SK-N-SH (cell line): ENCODE measurements at regions of chr5 and their contacts with region 1.

Region 1: GRCh38 chr5:130871346-130872086 is 293.5 kb downstream of the HINT1 start:
- DNase-seq: peak; percentile 30
- H3K4me3 ChIP-seq: no peak overlapping the region; a peak in 1 of 4 replicates
- H3K27ac ChIP-seq: no peak overlapping the region
- H3K4me1 ChIP-seq: no peaks in the 10 kb centered on the region
- H3K27me3 ChIP-seq: no peaks in the 10 kb centered on the region; the same call in 1 of the 2 replicates
- CTCF ChIP-seq: peak; percentile 75
- EP300 ChIP-seq: no peak
- RAD21 ChIP-seq: peak; percentile 59

Region 2: DNA sequence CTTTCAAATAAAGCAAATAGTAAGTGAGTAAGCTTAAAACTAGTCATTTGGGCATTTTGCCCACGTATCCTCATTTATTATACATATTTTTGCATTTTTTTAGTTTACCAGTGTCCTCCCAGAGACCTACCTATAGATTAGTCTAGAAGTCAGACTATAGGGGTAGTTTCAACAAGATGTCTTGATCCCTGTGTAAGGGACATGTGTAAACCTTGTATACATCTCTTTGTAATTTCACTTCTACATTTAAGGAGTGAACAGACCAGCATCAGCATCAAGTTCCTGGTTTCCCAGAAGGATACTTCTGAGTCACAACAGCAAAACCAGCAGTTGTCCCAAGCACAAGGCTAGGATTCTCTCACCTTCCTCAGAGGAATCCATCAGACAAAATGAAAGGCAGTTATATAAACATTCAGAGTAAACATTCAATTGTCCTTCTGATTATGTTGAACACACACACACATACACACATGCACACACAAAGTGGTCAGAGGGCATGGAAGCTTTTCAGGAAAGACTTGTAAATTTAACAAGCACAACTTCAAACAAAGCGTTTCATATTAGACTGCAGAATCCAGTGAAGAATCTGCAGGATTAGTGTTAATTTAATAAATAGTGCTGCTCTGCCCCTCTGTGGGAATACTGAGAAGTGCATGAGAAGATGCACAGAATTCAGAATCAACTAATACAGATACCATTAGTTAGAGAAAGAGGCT is 238.2 kb after region 1 on chr5:
- CTCF ChIA-PET with region 1: interaction called, 13 read pairs
- POLR2A ChIA-PET with region 1: interaction called, 4 read pairs
- DNase-seq: peak; percentile 46
- H3K4me3 ChIP-seq: no peak overlapping the region
- H3K27ac ChIP-seq: no peak overlapping the region
- H3K4me1 ChIP-seq: no peaks in the 10 kb centered on the region; a peak in 1 of 4 replicates
- H3K27me3 ChIP-seq: peaks cover 12% of the 10 kb centered on the region; the same call in 1 of the 2 replicates
- CTCF ChIP-seq: peak; percentile 88
- EP300 ChIP-seq: no peak
- RAD21 ChIP-seq: peak; percentile 87

Region 3: GRCh38 chr5:131209506-131210150 is 338.1 kb after region 1 on chr5:
- CTCF ChIA-PET with region 1: no interaction called
- POLR2A ChIA-PET with region 1: no interaction called
- DNase-seq: no peak
- H3K4me3 ChIP-seq: no peak overlapping the region
- H3K27ac ChIP-seq: no peak overlapping the region
- H3K4me1 ChIP-seq: peaks cover 0 to 2% of the 10 kb centered on the region in 2 experiments; a peak in 1 of 4 replicates
- H3K27me3 ChIP-seq: no peaks in the 10 kb centered on the region
- CTCF ChIP-seq: no peak
- EP300 ChIP-seq: no peak
- RAD21 ChIP-seq: no peak

Region 4: DNA sequence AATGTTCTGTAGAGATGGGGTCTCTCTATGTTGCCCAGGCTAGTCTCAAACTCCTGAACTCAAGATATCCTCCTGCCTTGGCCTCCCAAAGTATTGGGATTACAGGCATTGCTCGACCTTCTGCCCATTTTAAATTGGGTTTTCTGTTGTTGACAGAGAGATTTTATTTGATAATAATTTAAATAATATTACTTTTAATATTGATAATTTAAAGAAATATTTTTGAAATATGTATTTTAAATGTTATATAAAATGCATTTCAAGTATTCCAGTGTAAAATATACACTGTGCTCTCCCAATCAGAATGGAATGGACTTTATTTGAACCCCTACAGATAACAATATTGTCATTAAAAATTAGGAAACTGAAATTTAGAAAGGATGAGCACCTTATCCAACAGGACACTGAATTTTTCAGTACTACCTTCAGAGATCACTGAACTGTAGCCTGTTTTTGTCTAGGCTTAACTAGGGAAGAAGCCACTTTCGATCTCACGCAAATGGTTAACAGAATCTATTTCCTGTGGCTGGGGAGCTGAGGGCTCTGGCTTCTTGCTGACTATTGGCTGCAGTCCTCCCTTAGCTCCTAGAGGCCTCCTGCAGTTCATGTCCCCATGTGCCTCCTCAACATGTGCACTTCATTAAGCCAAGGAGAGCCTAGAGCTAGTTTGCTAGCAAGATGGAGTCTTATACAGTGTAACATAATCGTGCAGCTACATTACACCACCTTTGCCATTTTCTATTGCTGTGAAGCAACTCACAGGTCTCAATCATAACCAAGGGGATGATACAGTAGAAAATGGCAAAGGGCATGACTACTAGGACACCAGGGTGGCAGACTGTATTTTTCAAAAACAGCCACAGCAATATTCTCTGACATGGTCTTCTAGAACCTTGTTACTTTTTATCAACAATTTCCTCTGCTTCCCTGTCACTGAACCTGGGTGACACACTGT is 542.4 kb after region 1 on chr5:
- CTCF ChIA-PET with region 1: interaction called, 11 read pairs
- POLR2A ChIA-PET with region 1: no interaction called
- DNase-seq: no peak
- H3K4me3 ChIP-seq: no peak overlapping the region
- H3K27ac ChIP-seq: no peak overlapping the region; a peak in 1 of 4 replicates
- H3K4me1 ChIP-seq: peaks cover 0 to 2% of the 10 kb centered on the region in 2 experiments; a peak in 1 of 4 replicates
- H3K27me3 ChIP-seq: no peaks in the 10 kb centered on the region
- CTCF ChIP-seq: no peak
- EP300 ChIP-seq: no peak
- RAD21 ChIP-seq: no peak